Prostate gland (tissue), 2 donors: ENCODE measurements at regions of chr12 and their contacts with region 1.

Region 1: DNA sequence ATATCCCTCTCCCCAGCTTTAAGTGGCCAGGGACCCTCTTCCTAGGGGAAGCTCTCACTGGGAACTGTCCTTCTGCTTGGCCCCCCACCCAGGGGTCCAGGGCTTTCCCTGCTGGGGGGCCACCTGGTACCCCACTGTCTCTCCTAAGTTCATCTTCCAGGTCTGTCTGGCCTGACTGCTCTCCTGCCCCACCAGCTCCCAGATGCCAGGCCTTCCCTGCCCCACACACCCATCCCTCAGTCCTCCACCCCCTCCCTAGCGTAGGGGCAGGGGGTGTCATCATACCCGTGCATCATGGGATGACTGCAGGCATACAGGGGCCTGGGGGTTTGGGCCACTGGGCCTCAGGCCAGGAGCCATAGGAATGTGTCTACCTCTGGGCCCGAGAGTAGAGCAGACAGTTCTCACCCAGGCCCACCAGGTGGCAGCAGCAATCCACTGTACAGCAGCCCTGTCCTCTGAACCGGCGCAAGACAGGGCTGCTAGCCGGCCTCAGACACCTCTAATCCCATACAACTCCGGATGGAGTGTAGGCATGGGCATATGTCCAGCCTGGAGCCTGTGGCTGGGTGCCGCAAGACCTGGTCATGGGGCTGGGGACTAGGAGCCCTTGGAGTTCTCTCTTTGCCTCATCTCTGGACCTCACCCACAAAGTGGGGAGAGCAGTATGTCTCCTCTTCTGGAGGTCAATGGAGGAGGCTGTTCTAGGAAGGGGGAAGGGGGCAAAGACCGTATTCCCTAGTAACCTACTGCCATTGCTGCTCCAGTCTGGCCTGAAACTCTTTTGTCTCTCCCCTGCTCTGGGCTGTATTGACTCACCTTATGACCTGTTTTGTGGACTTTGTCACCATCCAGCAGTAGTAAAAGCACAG is 10.0 kb upstream of the SMARCD1 start:
- DNase-seq: peak; percentile 76
- H3K4me3 ChIP-seq: no peak overlapping the region
- H3K27ac ChIP-seq: no peak overlapping the region
- H3K4me1 ChIP-seq: no peaks in the 10 kb centered on the region
- H3K27me3 ChIP-seq: no peaks in the 10 kb centered on the region
- CTCF ChIP-seq: peak; percentile 66 to 96 (median 86)
- POLR2A ChIP-seq: no peak

Region 2: GRCh38 chr12:49776413-49776812 is 298.8 kb before region 1 on chr12:
- intact Hi-C with region 1: loop called (anchors 10 kb)
- DNase-seq: peak; percentile 51
- H3K4me3 ChIP-seq: no peak overlapping the region
- H3K27ac ChIP-seq: no peak overlapping the region
- H3K4me1 ChIP-seq: no peaks in the 10 kb centered on the region
- H3K27me3 ChIP-seq: no peaks in the 10 kb centered on the region
- CTCF ChIP-seq: peak in 3 of 4 experiments; percentile 62 to 82 (median 71)
- POLR2A ChIP-seq: no peak

Region 3: GRCh38 chr12:49787672-49788071 is 287.5 kb before region 1 on chr12:
- intact Hi-C with region 1: no loop called
- DNase-seq: no peak
- H3K4me3 ChIP-seq: no peak overlapping the region
- H3K27ac ChIP-seq: no peak overlapping the region
- H3K4me1 ChIP-seq: no peaks in the 10 kb centered on the region
- H3K27me3 ChIP-seq: no peaks in the 10 kb centered on the region
- CTCF ChIP-seq: no peak
- POLR2A ChIP-seq: no peak

Region 4: GRCh38 chr12:50025187-50026059 is 49.7 kb before region 1 on chr12 and contains the start of gene RACGAP1:
- intact Hi-C with region 1: loop called (anchors 5 kb)
- DNase-seq: peak; percentile 92
- H3K4me3 ChIP-seq: peak within 1 kb of the TSS; percentile 54 to 74
- H3K27ac ChIP-seq: peak within 1 kb of the TSS; percentile 42 to 58
- H3K4me1 ChIP-seq: no peaks in the 10 kb centered on the region
- H3K27me3 ChIP-seq: no peaks in the 10 kb centered on the region
- CTCF ChIP-seq: peak in 1 of 4 experiments; percentile 17
- POLR2A ChIP-seq: peak; percentile 57
- total RNA-seq, gene RACGAP1: 9.1 to 18.9 TPM

Region 5: DNA sequence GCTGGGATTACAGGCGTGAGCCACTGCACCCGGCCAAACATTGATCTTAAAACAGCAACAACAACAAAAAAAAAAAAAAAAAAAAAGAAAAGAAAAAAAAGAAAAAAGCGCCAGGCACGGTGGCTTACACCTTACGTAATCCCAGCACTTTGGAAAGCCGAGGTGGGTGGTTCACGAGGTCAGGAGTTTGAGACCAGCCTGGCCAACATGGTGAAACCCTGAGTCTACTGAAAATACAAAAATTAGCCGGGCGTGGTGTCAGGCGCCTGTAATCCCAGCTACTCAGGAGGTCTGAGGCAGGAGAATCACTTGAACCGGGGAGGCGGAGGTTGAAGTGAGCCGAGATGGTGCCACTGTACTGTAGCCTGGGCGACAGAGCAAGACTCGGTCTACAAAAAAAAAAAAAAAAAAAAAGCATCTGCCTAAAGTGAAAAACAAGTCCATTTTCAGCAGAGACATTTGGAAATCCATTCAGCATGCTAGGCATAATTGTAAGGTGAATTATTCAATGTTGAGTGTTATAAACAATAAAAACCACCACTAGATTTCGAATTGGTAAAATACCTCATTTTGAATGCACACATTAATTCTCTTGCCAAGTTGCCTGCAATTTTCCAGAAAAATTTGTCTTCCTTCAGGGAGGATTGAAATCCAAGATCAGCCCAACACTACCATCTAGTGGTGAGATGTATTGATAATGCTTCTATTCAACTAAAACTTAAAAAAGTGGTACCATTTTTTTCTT is 100.0 kb after region 1 on chr12:
- intact Hi-C with region 1: loop called (anchors 2 kb)
- DNase-seq: peak; percentile 33
- H3K4me3 ChIP-seq: no peak overlapping the region
- H3K27ac ChIP-seq: no peak overlapping the region
- H3K4me1 ChIP-seq: no peaks in the 10 kb centered on the region
- H3K27me3 ChIP-seq: no peaks in the 10 kb centered on the region
- CTCF ChIP-seq: peak; percentile 50 to 86 (median 74)
- POLR2A ChIP-seq: no peak

Region 6: GRCh38 chr12:50375802-50376201 is 300.6 kb after region 1 on chr12:
- intact Hi-C with region 1: no loop called
- DNase-seq: no peak
- H3K4me3 ChIP-seq: no peak overlapping the region
- H3K27ac ChIP-seq: no peak overlapping the region
- H3K4me1 ChIP-seq: no peaks in the 10 kb centered on the region
- H3K27me3 ChIP-seq: no peaks in the 10 kb centered on the region
- CTCF ChIP-seq: no peak
- POLR2A ChIP-seq: no peak